ENCODE measurements at regions of chr20 and their contacts with region 1.

Region 1: DNA sequence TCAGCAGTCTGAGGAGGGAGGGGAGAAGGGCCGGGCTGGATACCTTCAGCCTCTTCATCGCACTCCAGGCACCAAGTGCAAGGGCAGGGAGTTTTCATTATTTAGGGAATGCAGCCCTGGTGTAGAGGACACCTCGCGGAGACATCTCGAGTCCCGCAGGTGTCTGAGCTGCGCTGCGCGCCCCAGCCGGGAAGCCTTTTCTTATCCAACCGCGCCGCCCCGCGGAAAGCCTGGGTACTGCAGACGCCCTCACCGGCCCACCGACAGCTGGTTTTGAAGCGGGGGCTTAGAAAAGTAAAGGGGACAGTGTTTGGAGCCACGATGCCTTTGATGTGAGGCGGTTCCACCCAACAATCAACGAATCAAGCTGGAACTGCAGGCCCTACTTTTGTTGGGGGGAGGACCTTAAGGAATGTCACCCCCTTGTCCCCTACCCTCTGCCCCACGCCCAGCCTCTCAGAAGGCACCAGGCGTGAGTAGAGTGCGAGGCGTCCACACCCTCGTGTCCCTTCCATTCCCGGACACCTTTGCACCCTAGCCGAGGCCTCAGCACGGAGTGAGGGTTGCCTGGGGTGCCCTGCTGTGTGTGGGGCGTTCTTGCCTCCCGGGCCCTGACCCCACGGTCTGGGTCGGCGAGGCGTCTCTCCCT is 8.6 kb downstream of the NKX2-2 start:
- DNase-seq: peak in 4 of 5 donors; percentile 43 to 72 (median 52)
- H3K4me3 ChIP-seq: no peak overlapping the region
- H3K27ac ChIP-seq: no peak overlapping the region
- H3K4me1 ChIP-seq: peaks cover 3% of the 10 kb centered on the region
- H3K27me3 ChIP-seq: no peaks in the 10 kb centered on the region
- CTCF ChIP-seq: peak in 2 of 3 donors; percentile 61 to 75
- EP300 ChIP-seq: no peak
- POLR2A ChIP-seq: no peak

Region 2: DNA sequence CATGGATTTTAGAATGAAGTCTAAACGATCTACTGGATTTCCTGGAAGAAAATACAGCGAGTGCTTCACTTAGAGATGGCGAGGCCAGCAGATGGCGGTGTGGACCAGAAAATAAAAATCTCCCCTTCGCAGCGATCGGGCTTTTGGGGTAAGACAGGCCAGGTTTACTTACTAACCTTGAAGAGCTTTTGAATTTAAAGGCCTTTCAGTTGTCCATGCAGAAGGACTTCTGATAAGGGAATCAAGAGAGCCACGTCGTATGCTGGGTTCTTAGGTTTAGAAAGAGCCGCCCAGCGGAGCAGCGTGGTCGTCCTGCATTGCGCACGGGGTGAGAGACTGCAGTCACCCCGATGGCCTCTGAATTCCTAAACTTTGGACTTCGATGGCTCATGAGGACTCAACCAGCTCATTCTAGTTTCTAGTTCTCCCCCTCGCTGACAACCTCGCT is 667.7 kb before region 1 on chr20:
- intact Hi-C with region 1: loop called in 1 of 4 experiments (anchors 5 kb)
- DNase-seq: peak; percentile 37 to 78 (median 59)
- H3K4me3 ChIP-seq: no peak overlapping the region
- H3K27ac ChIP-seq: no peak overlapping the region
- H3K4me1 ChIP-seq: no peaks in the 10 kb centered on the region
- H3K27me3 ChIP-seq: no peaks in the 10 kb centered on the region
- CTCF ChIP-seq: peak in 2 of 3 donors; percentile 22 to 51
- EP300 ChIP-seq: no peak
- POLR2A ChIP-seq: no peak

Region 3: GRCh38 chr20:20860078-20860806 is 645.0 kb before region 1 on chr20:
- intact Hi-C with region 1: loop called (anchors 5 to 10 kb)
- DNase-seq: peak; percentile 69 to 87 (median 81)
- H3K4me3 ChIP-seq: no peak overlapping the region
- H3K27ac ChIP-seq: no peak overlapping the region
- H3K4me1 ChIP-seq: no peaks in the 10 kb centered on the region
- H3K27me3 ChIP-seq: no peaks in the 10 kb centered on the region
- CTCF ChIP-seq: peak; percentile 34 to 72 (median 63)
- EP300 ChIP-seq: no peak
- POLR2A ChIP-seq: no peak

Region 4: DNA sequence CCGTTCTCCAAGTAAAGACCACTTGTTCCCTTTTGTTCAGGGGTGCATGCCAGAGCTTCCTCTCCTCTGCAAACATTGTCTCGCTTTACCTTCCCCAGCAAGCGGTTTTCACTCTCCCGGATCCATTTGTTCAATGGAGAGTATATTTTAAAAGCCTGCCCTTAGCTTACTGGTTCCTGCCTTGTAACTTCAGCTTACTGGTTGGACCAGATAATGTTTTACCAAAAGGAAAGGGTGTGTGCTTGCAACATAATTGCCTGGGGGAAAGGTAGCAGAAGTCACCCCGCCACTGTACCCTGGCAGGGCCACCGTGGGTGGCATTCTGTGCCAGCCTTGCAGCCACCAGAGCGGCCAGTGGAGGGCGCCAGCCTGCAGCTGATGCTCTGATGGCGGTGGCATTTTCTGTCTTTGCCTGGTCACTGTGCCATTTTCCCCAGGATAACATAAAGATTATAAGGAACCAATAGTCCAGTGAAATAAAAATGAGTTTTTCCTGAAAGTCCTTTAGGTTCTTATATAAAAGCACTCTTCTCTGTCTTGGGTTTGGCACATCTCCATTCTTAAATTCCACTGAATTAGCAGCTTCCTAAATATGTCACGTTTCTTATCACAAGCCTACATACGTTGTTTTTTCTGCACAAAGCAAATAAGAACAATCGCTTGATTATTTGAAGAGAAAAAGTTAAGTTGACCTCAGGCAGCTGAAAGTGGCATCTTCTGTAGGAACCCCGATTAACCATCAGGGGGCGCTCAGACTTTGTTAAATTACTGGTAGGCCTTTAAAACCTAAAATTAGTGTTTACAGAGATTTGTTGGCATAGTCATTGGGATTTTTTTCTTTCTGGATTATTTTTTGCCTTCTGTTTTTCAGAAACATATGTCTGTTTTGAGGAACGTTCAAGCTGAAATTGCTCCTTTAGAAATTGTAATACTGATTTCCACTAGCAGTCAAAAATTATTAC is 269.5 kb before region 1 on chr20:
- intact Hi-C with region 1: loop called (anchors 2 to 10 kb)
- DNase-seq: peak; percentile 22 to 52 (median 42)
- H3K4me3 ChIP-seq: no peak overlapping the region
- H3K27ac ChIP-seq: no peak overlapping the region
- H3K4me1 ChIP-seq: no peaks in the 10 kb centered on the region
- H3K27me3 ChIP-seq: no peaks in the 10 kb centered on the region
- CTCF ChIP-seq: peak in 2 of 3 donors; percentile 24 to 41
- EP300 ChIP-seq: no peak
- POLR2A ChIP-seq: no peak